Heart left ventricle (tissue), 16 donors: ENCODE measurements at regions of chr7 and their contacts with region 1.

Region 1: GRCh38 chr7:5677538-5678294 is 103.7 kb downstream of the RNF216 start:
- DNase-seq: peak; percentile 62 to 79 (median 70)
- ATAC-seq: peak; percentile 72 to 86 (median 78)
- H3K4me3 ChIP-seq: no peak overlapping the region
- H3K27ac ChIP-seq: peak overlapping the region in 10 of 12 donors; percentile 12 to 73 (median 56)
- H3K4me1 ChIP-seq: peaks cover 6 to 66% (median 54%) of the 10 kb centered on the region in 12 donors
- H3K27me3 ChIP-seq: no peaks in the 10 kb centered on the region
- CTCF ChIP-seq: peak; percentile 63 to 85 (median 76)
- POLR2A ChIP-seq: no peak

Region 2: GRCh38 chr7:5363729-5364128 is 314.0 kb before region 1 on chr7:
- intact Hi-C with region 1: loop called in 2 of 10 experiments (anchors 10 kb)
- DNase-seq: no peak
- ATAC-seq: no peak
- H3K4me3 ChIP-seq: no peak overlapping the region
- H3K27ac ChIP-seq: no peak overlapping the region
- H3K4me1 ChIP-seq: peaks cover 0 to 14% (median 8%) of the 10 kb centered on the region in 12 donors
- H3K27me3 ChIP-seq: no peaks in the 10 kb centered on the region
- CTCF ChIP-seq: no peak
- POLR2A ChIP-seq: no peak

Region 3: DNA sequence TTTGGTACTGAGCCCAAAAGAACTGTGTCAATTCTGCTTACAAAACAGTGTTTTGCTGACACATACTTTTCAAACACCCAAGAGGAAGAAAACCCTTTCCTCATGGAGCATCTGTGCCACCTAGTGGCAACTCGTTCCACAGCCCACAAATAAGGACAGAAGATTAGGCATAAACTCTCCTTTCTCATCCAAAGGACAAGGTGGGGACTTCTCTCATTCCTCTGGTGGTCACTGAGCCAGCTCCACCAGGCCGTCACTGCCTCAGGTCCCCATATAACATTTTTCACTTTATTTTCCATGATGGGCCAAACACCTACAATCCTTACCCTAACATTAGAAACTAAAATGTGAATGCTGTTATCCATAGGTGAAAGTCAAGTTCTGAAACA is 26.8 kb after region 1 on chr7:
- intact Hi-C with region 1: loop called in 2 of 10 experiments (anchors 2 kb)
- DNase-seq: peak; percentile 70 to 83 (median 76)
- ATAC-seq: peak; percentile 43 to 72 (median 70)
- H3K4me3 ChIP-seq: no peak overlapping the region
- H3K27ac ChIP-seq: peak overlapping the region in 4 of 12 donors; percentile 42 to 92 (median 90)
- H3K4me1 ChIP-seq: peaks cover 0 to 52% (median 30%) of the 10 kb centered on the region in 12 donors
- H3K27me3 ChIP-seq: no peaks in the 10 kb centered on the region
- CTCF ChIP-seq: peak; percentile 88 to 97 (median 91)
- POLR2A ChIP-seq: no peak